Endothelial cell of umbilical vein (primary cell): ENCODE measurements at regions of chr1 and their contacts with region 1.

Region 1: GRCh38 chr1:228109073-228109961 is at the start of gene MRPL55:
- DNase-seq: peak; percentile 98
- H3K4me3 ChIP-seq: peak within 1 kb of the TSS; percentile 29 to 92 (median 63)
- H3K27ac ChIP-seq: peak within 1 kb of the TSS; percentile 32
- H3K4me1 ChIP-seq: peaks cover 13% of the 10 kb centered on the region
- H3K27me3 ChIP-seq: no peaks in the 10 kb centered on the region
- CTCF ChIP-seq: no peak
- POLR2A ChIP-seq: peak; percentile 82
- total RNA-seq, gene MRPL55: 57.0 and 58.7 TPM in 2 replicates

Region 2: GRCh38 chr1:228004331-228004855 is 104.9 kb before region 1 on chr1:
- CTCF ChIA-PET with region 1: interaction called, 10 read pairs
- POLR2A ChIA-PET with region 1: no interaction called
- dilution Hi-C with region 1: no loop called
- intact Hi-C with region 1: no loop called
- DNase-seq: no peak
- H3K4me3 ChIP-seq: no peak overlapping the region
- H3K27ac ChIP-seq: no peak overlapping the region
- H3K4me1 ChIP-seq: no peaks in the 10 kb centered on the region
- H3K27me3 ChIP-seq: peaks cover 41 to 46% of the 10 kb centered on the region in 2 experiments
- CTCF ChIP-seq: peak; percentile 8 to 48
- POLR2A ChIP-seq: no peak